ENCODE measurements at regions of chr2 and their contacts with region 1.

Region 1: DNA sequence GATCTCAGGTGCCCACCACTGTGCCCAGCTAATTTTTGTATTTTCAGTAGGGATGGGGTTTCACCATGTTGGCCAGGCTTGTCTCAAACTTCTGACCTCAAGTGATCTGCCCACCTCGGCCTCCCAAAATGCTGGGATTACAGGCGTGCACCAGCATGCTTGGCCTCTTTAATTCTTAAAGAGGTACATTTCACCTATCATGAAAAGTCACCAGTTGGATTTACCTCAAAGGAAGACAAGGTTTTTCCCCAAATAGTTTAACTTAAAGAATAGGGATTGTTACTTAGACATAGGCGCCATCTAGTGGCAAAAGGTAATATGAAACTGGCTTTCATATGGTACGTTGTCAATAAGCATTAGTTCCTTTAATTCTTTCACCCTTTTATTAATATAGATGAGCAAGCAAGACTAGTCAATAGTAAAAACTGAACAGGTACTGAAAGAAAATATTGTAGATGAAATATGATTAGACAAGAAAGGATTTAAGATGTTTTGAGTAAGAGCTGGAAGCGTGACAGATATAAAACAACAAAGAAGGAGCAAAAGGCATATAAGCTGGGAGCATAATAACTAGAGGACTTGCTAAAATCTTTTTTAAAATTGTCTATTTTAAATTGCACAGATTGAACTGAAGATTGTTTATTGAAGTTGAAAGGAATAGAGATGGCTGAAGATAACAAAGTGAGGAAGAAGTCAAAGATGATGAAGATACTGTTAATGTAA is 35.0 kb upstream of the PSMD14 start:
- DNase-seq: peak in 2 of 4 donors; percentile 21 to 49
- ATAC-seq: no peak
- H3K4me3 ChIP-seq: no peak overlapping the region
- H3K27ac ChIP-seq: no peak overlapping the region
- H3K4me1 ChIP-seq: no peaks in the 10 kb centered on the region
- H3K27me3 ChIP-seq: no peaks in the 10 kb centered on the region
- CTCF ChIP-seq: peak; percentile 39 to 75 (median 67)
- POLR2A ChIP-seq: no peak

Region 2: GRCh38 chr2:161223139-161223732 is 50.0 kb before region 1 on chr2:
- intact Hi-C with region 1: loop called (anchors 10 kb)
- DNase-seq: no peak
- ATAC-seq: peak; percentile 55
- H3K4me3 ChIP-seq: no peak overlapping the region
- H3K27ac ChIP-seq: no peak overlapping the region
- H3K4me1 ChIP-seq: no peaks in the 10 kb centered on the region
- H3K27me3 ChIP-seq: no peaks in the 10 kb centered on the region
- CTCF ChIP-seq: peak; percentile 46 to 82 (median 66)
- POLR2A ChIP-seq: no peak